CD4-positive, alpha-beta memory T cell (primary cell): ENCODE measurements at regions of chr3 and their contacts with region 1.

Region 1: DNA sequence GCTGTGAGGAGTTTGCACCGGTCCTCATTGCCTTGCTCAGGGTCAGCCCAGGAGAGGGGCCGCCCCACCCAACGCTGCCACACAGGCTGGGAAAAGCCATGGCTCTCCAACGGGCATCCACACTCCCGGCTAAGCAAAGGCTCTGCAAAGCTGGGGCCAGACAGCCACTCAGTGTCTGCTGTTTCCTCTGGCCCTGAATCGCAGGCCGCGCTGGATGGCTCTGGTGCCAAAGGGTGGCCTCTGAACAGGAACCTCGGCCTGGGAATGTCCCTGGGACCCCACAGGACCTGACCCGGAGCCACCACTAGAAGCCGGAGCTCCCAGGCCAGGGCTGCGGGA is 42.9 kb downstream of the RPN1 start:
- DNase-seq: no peak
- H3K4me3 ChIP-seq: peak overlapping the region in 1 of 2 donors; percentile 57
- H3K4me3 Mint-ChIP-seq: peak overlapping the region in 4 of 8 donors; percentile 26 to 46 (median 33)
- H3K27ac ChIP-seq: no peak overlapping the region
- H3K27ac Mint-ChIP-seq: no peak overlapping the region
- H3K4me1 ChIP-seq: peaks cover 4% of the 10 kb centered on the region
- H3K4me1 Mint-ChIP-seq: peaks cover 0 to 1% (median under 1%) of the 10 kb centered on the region in 4 donors
- H3K27me3 ChIP-seq: peaks cover 5% of the 10 kb centered on the region
- H3K27me3 Mint-ChIP-seq: no peaks in the 10 kb centered on the region

Region 2: GRCh38 chr3:128075516-128076482 is 531.9 kb before region 1 on chr3:
- CTCF ChIA-PET with region 1: no interaction called
- POLR2A ChIA-PET with region 1: no interaction called
- intact Hi-C with region 1: loop called (anchors 1 kb)
- DNase-seq: peak; percentile 81 to 85 (median 82)
- H3K4me3 ChIP-seq: peak overlapping the region; percentile 29 to 39
- H3K4me3 Mint-ChIP-seq: peak overlapping the region; percentile 65 to 82 (median 75)
- H3K27ac ChIP-seq: peak overlapping the region; percentile 14
- H3K27ac Mint-ChIP-seq: peak overlapping the region in 6 of 7 donors; percentile 37 to 85 (median 64)
- H3K4me1 ChIP-seq: peaks cover 20% of the 10 kb centered on the region
- H3K4me1 Mint-ChIP-seq: peaks cover 2 to 27% (median 6%) of the 10 kb centered on the region in 4 donors
- H3K27me3 ChIP-seq: no peaks in the 10 kb centered on the region
- H3K27me3 Mint-ChIP-seq: no peaks in the 10 kb centered on the region

Region 3: DNA sequence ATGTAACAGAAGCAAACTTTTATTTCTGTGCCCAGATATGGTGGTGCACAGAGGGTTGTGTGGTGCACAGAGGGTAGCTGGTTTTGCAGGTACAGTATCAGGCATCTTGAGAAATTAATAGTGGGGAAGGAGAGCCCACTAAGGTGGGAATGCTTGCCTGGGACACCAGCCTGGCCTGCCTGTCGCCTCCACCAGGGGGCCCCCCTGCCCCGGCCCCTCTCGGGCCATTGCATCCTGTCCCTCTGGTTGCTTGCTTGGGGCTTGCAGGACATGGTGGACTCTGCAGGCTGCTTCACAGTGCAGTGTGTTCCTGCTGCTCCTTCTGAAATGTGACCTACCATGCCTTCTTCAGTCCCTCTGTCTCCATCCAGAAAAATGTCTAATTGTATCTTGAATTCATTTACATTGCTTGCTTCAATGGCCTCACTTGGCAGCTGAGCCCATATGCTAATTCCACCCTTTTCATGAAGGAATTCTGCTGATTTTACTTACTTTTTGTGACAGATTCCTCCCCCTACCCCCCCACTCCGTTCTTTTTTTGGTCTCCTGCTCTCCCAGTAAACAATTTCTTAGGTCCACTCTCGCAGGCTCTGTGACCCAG is 380.8 kb before region 1 on chr3:
- CTCF ChIA-PET with region 1: interaction called, 6 read pairs
- POLR2A ChIA-PET with region 1: no interaction called
- intact Hi-C with region 1: loop called (anchors 5 kb)
- DNase-seq: peak in 4 of 5 donors; percentile 19 to 30 (median 23)
- H3K4me3 ChIP-seq: no peak overlapping the region
- H3K4me3 Mint-ChIP-seq: peak overlapping the region in 2 of 8 donors; percentile 13 to 51
- H3K27ac ChIP-seq: no peak overlapping the region
- H3K27ac Mint-ChIP-seq: peak overlapping the region in 1 of 7 donors; percentile 0
- H3K4me1 ChIP-seq: no peaks in the 10 kb centered on the region
- H3K4me1 Mint-ChIP-seq: peaks cover 7 to 14% (median 11%) of the 10 kb centered on the region in 4 donors
- H3K27me3 ChIP-seq: no peaks in the 10 kb centered on the region
- H3K27me3 Mint-ChIP-seq: no peaks in the 10 kb centered on the region

Region 4: DNA sequence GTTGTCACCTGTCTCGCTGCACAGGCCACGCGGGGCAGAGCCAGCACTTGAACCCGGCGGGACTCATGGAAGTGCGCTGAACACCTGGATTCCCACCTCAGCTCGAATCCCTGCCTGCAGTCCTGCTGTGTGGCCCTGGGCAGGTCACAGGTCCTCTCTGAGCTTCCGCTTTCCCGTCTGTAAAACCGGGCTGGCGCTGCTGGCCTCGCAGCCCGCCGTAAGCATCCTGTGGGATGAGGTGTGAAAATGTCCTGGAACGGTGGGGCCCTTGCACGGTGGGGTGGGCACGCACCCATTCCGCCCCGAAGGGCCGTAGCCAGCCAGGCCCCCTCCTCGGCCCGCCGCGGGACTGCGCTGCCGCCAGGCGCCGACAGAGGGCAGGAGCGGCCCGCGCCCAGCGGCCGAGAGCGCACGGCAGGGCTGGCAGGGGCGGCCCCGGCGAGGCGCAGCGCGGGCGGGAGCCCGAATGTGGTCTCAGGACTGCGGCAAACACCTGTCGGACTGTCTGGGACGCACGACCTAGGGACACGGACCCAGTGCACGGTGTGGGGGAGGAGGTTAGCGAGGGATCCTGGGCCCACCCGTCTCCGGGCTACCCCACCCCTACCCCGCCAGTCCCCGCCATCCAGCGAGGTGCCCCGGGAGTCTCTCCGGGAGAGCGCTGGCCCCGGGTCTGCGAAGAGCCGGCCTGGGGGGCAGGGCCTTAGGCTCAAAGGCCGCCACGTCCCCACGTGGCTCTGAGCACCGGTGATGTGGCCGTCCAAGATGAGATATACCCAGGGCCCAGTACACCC is 181.4 kb before region 1 on chr3:
- CTCF ChIA-PET with region 1: interaction called, 64 read pairs
- POLR2A ChIA-PET with region 1: interaction called, 3 read pairs
- intact Hi-C with region 1: loop called (anchors 1 kb)
- DNase-seq: peak in 4 of 5 donors; percentile 49 to 66 (median 52)
- H3K4me3 ChIP-seq: no peak overlapping the region
- H3K4me3 Mint-ChIP-seq: no peak overlapping the region
- H3K27ac ChIP-seq: no peak overlapping the region
- H3K27ac Mint-ChIP-seq: no peak overlapping the region
- H3K4me1 ChIP-seq: peaks cover 3% of the 10 kb centered on the region
- H3K4me1 Mint-ChIP-seq: peaks cover 0 to 6% (median 0%) of the 10 kb centered on the region in 4 donors
- H3K27me3 ChIP-seq: no peaks in the 10 kb centered on the region
- H3K27me3 Mint-ChIP-seq: peaks cover 13 to 17% of the 10 kb centered on the region in 2 donors

Region 5: DNA sequence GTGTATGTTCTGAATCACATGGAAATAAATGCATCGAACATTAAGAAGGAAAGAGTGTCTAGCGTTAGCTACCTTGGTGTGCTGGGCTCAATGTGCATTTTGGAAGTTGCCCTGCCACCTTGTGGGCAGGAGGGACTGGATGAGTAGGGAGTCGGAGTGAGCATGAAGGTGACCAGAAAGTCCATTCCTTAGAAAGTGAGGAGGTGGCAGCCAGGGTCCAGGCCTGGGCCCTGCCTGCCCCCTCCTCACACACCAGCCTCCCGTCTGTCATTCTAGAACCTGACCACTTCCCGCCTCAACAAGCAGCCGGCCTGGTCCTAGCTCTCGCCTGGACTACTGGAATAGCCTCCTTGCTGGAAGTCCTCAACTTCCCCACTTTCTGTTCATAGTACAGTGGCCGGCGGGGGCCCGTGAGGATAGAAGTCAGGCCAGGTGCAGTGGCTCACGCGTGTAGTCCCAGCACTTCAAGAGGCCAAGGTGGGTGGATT is 104.5 kb before region 1 on chr3:
- CTCF ChIA-PET with region 1: interaction called, 3 read pairs
- POLR2A ChIA-PET with region 1: no interaction called
- intact Hi-C with region 1: loop called (anchors 5 kb)
- DNase-seq: no peak
- H3K4me3 ChIP-seq: no peak overlapping the region
- H3K4me3 Mint-ChIP-seq: no peak overlapping the region
- H3K27ac ChIP-seq: no peak overlapping the region
- H3K27ac Mint-ChIP-seq: no peak overlapping the region
- H3K4me1 ChIP-seq: no peaks in the 10 kb centered on the region
- H3K4me1 Mint-ChIP-seq: peaks cover 0 to 5% (median 0%) of the 10 kb centered on the region in 4 donors
- H3K27me3 ChIP-seq: peaks cover 7% of the 10 kb centered on the region
- H3K27me3 Mint-ChIP-seq: peaks cover 17 to 41% of the 10 kb centered on the region in 2 donors

Region 6: DNA sequence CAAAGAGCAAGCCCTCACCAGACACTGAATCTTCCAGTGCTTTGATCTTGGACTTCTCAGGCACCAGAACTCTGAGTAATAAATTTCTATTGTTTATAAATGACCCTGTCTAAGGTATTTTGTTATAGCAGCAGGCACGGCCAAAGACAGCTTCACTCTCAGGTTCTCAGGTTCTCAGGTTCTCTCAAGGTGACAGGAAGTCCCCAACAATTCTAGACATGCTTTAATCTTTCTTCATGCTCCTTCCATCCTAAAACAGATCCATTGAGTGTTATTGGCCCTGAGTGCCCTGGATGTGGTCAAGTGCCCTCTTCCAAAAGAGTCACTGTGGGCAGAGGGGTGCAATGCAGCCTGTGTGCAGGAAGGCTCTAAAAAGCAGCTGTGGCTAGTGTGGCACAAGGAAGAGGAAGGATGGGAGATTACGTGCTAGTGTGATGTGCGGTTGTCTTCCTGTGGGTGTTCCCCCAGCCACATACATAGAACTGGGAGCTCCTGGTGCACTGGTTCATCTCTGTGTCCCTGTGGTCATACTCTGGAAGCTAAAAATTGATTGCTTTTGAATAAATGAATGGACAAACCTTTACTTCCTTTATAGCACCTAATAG is 107.3 kb after region 1 on chr3:
- CTCF ChIA-PET with region 1: no interaction called
- POLR2A ChIA-PET with region 1: no interaction called
- intact Hi-C with region 1: no loop called
- DNase-seq: peak; percentile 38 to 64 (median 47)
- H3K4me3 ChIP-seq: no peak overlapping the region
- H3K4me3 Mint-ChIP-seq: peak overlapping the region in 6 of 8 donors; percentile 41 to 80 (median 67)
- H3K27ac ChIP-seq: no peak overlapping the region
- H3K27ac Mint-ChIP-seq: peak overlapping the region; percentile 58 to 92 (median 91)
- H3K4me1 ChIP-seq: peaks cover 12% of the 10 kb centered on the region
- H3K4me1 Mint-ChIP-seq: peaks cover 9 to 18% (median 13%) of the 10 kb centered on the region in 4 donors
- H3K27me3 ChIP-seq: no peaks in the 10 kb centered on the region
- H3K27me3 Mint-ChIP-seq: no peaks in the 10 kb centered on the region

Region 7: GRCh38 chr3:129195731-129196256 is 588.1 kb after region 1 on chr3:
- CTCF ChIA-PET with region 1: no interaction called
- POLR2A ChIA-PET with region 1: no interaction called
- intact Hi-C with region 1: no loop called
- DNase-seq: no peak
- H3K4me3 ChIP-seq: no peak overlapping the region
- H3K4me3 Mint-ChIP-seq: no peak overlapping the region
- H3K27ac ChIP-seq: no peak overlapping the region
- H3K27ac Mint-ChIP-seq: no peak overlapping the region
- H3K4me1 ChIP-seq: no peaks in the 10 kb centered on the region
- H3K4me1 Mint-ChIP-seq: no peaks in the 10 kb centered on the region
- H3K27me3 ChIP-seq: no peaks in the 10 kb centered on the region
- H3K27me3 Mint-ChIP-seq: no peaks in the 10 kb centered on the region